Left cardiac atrium (tissue), 4 donors: ENCODE measurements at regions of chr7 and their contacts with region 1.

Region 1: DNA sequence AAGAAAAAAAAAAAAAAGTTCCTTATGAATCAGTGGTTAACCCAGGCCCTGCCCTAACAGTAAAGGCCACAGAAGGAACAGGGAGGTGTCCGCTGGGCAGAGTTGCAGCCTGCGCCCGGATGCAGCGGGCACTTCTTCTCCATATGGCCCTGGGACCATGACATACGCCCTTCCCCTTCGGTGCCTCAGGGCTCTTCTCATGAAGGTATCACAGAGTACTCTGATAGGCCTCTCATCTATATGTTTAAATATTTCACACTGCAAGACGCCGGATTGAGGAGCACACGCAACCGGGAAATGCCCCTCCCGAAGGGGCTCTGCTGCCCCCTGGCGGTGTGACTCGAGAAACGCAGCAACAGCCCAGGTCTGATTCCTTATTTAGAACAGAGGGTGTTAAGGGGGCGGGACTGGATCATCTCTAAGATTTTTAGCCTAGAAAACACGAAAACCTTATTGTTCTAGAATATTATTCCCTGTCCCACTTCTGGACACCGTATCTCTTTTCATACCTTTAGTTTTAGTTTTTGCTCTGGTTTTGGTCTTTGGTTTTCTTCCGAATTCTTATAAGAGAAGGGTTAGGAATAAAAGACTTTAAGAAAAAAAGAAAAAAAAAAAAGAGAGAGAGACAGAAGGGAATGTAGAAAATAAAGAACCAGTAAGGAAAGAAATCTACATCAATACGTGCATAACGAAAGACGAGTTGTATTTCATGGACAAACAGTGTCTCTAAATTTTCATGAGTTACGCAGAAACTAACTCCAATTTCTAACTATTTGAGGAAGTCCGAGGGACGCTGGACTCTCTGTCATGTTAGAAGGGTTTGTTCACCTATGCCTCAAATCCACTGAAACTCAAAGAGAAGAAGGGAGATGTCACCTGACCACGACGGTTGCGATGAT is 12.0 kb downstream of the DAGLB start:
- DNase-seq: peak; percentile 69
- ATAC-seq: peak; percentile 85 to 88

Region 2: GRCh38 chr7:5854738-5855137 is 581.0 kb before region 1 on chr7:
- intact Hi-C with region 1: loop called in 1 of 2 experiments (anchors 10 kb)
- DNase-seq: no peak
- ATAC-seq: no peak

Region 3: GRCh38 chr7:5997222-5997808 is 438.4 kb before region 1 on chr7:
- intact Hi-C with region 1: loop called in 1 of 2 experiments (anchors 10 kb)
- DNase-seq: peak; percentile 32
- ATAC-seq: peak; percentile 50 to 81